Endothelial cell of umbilical vein (primary cell): ENCODE measurements at regions of chr4 and their contacts with region 1.

Region 1: DNA sequence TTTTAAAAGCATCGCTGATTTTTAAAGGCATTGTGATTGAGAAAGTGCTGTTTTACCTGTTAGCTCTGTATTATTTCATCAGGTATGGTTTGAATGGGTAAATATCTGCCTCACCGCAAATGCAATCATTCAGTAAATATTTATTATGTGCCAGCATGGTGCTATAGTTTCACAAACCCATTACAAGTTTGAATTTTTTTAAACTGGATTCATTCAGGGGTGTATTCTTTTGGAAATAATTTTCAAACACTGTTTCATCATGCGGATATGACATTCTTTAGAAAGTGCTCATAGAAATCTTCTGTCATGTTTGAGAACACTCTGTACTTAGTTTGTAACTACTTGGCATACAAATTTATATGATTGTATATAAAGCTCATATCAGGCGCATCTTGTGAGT is 37.2 kb downstream of the LIMCH1 start:
- DNase-seq: no peak
- H3K4me3 ChIP-seq: no peak overlapping the region
- H3K27ac ChIP-seq: no peak overlapping the region
- H3K4me1 ChIP-seq: no peaks in the 10 kb centered on the region
- H3K27me3 ChIP-seq: peaks cover 22 to 35% of the 10 kb centered on the region in 2 experiments
- CTCF ChIP-seq: no peak
- POLR2A ChIP-seq: no peak

Region 2: DNA sequence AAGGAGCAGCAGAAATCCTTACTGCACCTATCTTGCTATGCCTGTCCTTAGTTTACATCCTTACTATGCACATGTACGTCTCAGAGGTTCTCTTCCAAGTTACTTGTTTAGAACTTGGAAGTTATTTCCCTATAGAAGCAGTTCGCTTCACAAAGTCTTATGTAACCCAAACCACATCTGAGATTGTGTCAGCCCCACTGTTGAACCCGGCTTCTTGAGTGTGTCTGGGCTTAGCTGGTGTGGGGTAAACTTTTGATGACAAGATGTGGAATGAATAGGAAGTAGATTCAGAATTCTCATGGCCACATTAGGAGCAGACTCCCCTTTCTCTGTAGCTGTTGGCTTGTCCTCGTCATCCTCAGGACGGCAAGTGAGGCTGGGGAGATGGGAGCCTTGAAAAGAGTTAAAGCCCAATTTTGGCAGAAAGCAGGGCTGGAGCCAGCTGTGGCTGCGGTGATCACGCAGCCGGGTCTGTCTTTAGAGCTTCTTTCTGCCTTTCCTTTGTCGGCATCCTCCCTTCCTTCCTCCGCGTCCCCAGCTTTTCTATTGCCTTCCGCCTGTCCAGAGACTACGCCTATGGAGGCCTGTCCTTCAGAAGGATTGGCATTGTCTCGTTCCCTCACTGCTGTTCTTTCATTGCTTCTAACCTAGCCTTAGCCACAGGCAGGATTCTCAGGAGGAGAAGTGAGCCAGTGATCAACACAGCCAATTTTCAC is 60.3 kb before region 1 on chr4:
- CTCF ChIA-PET with region 1: interaction called, 3 read pairs
- POLR2A ChIA-PET with region 1: no interaction called
- dilution Hi-C with region 1: no loop called
- intact Hi-C with region 1: loop called (anchors 5 kb)
- DNase-seq: no peak
- H3K4me3 ChIP-seq: no peak overlapping the region
- H3K27ac ChIP-seq: no peak overlapping the region
- H3K4me1 ChIP-seq: no peaks in the 10 kb centered on the region
- H3K27me3 ChIP-seq: peaks cover 0 to 9% of the 10 kb centered on the region in 2 experiments
- CTCF ChIP-seq: no peak
- POLR2A ChIP-seq: no peak